ENCODE measurements at regions of chr18 and their contacts with region 1.

Region 1: DNA sequence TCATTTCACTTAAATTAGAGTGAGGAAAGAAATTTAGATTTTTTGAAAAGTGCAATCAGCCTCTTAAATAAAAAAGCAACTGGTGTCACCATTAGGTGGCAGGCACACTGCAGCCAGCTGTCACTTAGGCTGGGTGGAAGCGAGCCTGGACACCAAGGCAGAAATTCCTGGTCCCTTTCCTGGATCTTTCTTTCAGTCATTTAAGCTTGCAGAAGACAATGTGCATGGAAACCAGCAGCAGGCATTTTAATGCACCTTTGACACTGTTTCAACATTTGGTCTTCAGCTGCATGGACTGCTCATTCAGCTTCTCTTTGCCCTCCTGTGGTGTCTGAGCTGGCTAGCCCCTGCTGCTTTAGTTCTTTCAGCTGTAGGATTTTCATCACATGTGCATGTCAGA is 61.0 kb downstream of the AQP4 start:
- DNase-seq: no peak
- ATAC-seq: peak in 1 of 2 donors; percentile 30

Region 2: DNA sequence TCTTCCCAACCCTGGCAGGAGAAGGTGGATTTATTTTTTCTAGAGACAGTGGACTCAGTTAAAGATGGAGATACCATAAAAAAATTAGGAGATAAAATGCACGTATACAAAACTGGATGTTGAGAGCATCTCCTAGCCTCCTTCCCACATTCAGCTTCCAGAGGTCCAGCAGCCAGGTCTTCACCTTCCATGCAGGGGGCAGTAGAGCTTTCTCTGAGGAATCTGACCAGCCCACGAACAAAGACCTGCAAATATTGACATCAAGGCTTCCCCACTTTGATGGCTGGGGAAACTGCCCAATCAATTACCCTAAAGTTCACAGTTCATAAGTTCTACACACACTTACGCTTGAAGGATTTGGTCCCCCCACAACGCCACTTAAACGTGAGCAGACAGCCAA is 36.4 kb after region 1 on chr18:
- intact Hi-C with region 1: no loop called
- DNase-seq: no peak
- ATAC-seq: no peak

Region 3: GRCh38 chr18:26863122-26863879 is 58.8 kb after region 1 on chr18:
- intact Hi-C with region 1: loop called in 1 of 2 experiments (anchors 10 kb)
- DNase-seq: peak; percentile 75
- ATAC-seq: peak; percentile 92 to 97

Region 4: DNA sequence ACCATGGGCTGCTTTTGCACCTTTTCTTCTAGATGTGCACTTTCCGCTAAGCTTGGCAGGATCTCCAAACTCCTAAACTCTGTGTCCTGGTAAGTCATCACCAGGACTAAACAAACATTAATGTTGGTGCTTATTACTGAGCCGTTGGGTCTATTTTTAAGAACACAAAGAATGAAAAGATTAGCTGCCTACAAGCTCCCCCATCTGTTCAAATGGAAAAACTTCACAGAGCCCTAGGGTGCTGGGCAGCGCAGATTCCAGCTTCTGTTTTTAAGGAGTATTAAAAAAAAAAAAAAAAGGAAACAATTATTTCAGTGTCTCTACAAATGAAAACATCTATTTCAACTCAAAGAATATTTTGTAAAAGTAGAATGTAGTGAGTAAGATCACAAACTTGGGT is 158.8 kb after region 1 on chr18:
- intact Hi-C with region 1: loop called (anchors 5 to 10 kb)
- DNase-seq: no peak
- ATAC-seq: no peak

Region 5: GRCh38 chr18:27005589-27005988 is 201.1 kb after region 1 on chr18:
- intact Hi-C with region 1: loop called in 1 of 2 experiments (anchors 5 kb)
- DNase-seq: no peak
- ATAC-seq: no peak